Caco-2 (cell line): ENCODE measurements at regions of chr3 and their contacts with region 1.

Region 1: GRCh38 chr3:60755096-60755495 is 496.2 kb downstream of the FHIT start:
- DNase-seq: peak; percentile 48 to 52
- H3K4me3 ChIP-seq: no peak overlapping the region
- H3K4me3 Mint-ChIP-seq: no peak overlapping the region
- H3K27ac Mint-ChIP-seq: no peak overlapping the region
- H3K4me1 ChIP-seq: no peaks in the 10 kb centered on the region
- H3K4me1 Mint-ChIP-seq: no peaks in the 10 kb centered on the region
- H3K27me3 ChIP-seq: no peaks in the 10 kb centered on the region
- H3K27me3 Mint-ChIP-seq: no peaks in the 10 kb centered on the region
- CTCF ChIP-seq: peak; percentile 37 to 48

Region 2: GRCh38 chr3:60877188-60877587 is 122.1 kb after region 1 on chr3:
- CTCF ChIA-PET with region 1: interaction called, 3 read pairs
- POLR2A ChIA-PET with region 1: no interaction called
- intact Hi-C with region 1: loop called (anchors 1 kb)
- DNase-seq: peak in 1 of 2 experiments; percentile 15
- H3K4me3 ChIP-seq: no peak overlapping the region
- H3K4me3 Mint-ChIP-seq: no peak overlapping the region
- H3K27ac Mint-ChIP-seq: peak overlapping the region; percentile 5
- H3K4me1 ChIP-seq: no peaks in the 10 kb centered on the region
- H3K4me1 Mint-ChIP-seq: no peaks in the 10 kb centered on the region
- H3K27me3 ChIP-seq: no peaks in the 10 kb centered on the region
- H3K27me3 Mint-ChIP-seq: peaks cover 4% of the 10 kb centered on the region
- CTCF ChIP-seq: no peak

Region 3: DNA sequence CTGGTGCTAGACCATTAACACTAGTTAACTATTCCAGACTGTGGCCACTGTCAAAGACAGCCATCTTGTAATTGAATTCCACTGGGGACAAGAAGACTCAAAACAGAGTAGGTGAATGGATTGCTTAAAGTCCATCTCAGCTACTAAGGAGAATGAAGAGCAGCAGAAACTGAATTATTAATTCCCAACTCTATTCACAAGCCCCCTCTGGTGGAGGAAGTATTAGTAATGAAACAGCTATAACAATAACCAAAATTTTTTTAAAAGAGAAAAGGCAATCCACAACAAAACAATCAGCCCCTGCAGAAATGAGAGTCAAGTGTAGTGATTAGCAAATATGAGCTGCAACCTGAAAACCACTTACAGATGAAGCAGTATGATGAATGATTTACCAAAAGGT is 193.4 kb after region 1 on chr3:
- CTCF ChIA-PET with region 1: interaction called, 7 read pairs
- POLR2A ChIA-PET with region 1: no interaction called
- intact Hi-C with region 1: loop called (anchors 10 kb)
- DNase-seq: no peak
- H3K4me3 ChIP-seq: no peak overlapping the region
- H3K4me3 Mint-ChIP-seq: no peak overlapping the region
- H3K27ac Mint-ChIP-seq: no peak overlapping the region
- H3K4me1 ChIP-seq: no peaks in the 10 kb centered on the region
- H3K4me1 Mint-ChIP-seq: no peaks in the 10 kb centered on the region
- H3K27me3 ChIP-seq: no peaks in the 10 kb centered on the region
- H3K27me3 Mint-ChIP-seq: no peaks in the 10 kb centered on the region
- CTCF ChIP-seq: peak in 1 of 2 experiments; percentile 23

Region 4: GRCh38 chr3:61008998-61009380 is 253.9 kb after region 1 on chr3:
- CTCF ChIA-PET with region 1: no interaction called
- POLR2A ChIA-PET with region 1: no interaction called
- intact Hi-C with region 1: no loop called
- DNase-seq: no peak
- H3K4me3 ChIP-seq: no peak overlapping the region
- H3K4me3 Mint-ChIP-seq: no peak overlapping the region
- H3K27ac Mint-ChIP-seq: no peak overlapping the region
- H3K4me1 ChIP-seq: no peaks in the 10 kb centered on the region
- H3K4me1 Mint-ChIP-seq: no peaks in the 10 kb centered on the region
- H3K27me3 ChIP-seq: no peaks in the 10 kb centered on the region
- H3K27me3 Mint-ChIP-seq: no peaks in the 10 kb centered on the region
- CTCF ChIP-seq: no peak

Region 5: GRCh38 chr3:61299343-61300005 is 544.4 kb after region 1 on chr3:
- CTCF ChIA-PET with region 1: no interaction called
- POLR2A ChIA-PET with region 1: no interaction called
- intact Hi-C with region 1: loop called (anchors 10 kb)
- DNase-seq: peak in 1 of 2 experiments; percentile 15
- H3K4me3 ChIP-seq: no peak overlapping the region
- H3K4me3 Mint-ChIP-seq: no peak overlapping the region
- H3K27ac Mint-ChIP-seq: no peak overlapping the region
- H3K4me1 ChIP-seq: no peaks in the 10 kb centered on the region
- H3K4me1 Mint-ChIP-seq: no peaks in the 10 kb centered on the region
- H3K27me3 ChIP-seq: no peaks in the 10 kb centered on the region; the same call in 1 of the 2 replicates
- H3K27me3 Mint-ChIP-seq: peaks cover 4% of the 10 kb centered on the region
- CTCF ChIP-seq: peak in 1 of 2 experiments; percentile 3

Region 6: GRCh38 chr3:61371123-61371522 is 616.0 kb after region 1 on chr3:
- CTCF ChIA-PET with region 1: no interaction called
- POLR2A ChIA-PET with region 1: no interaction called
- intact Hi-C with region 1: loop called (anchors 2 kb)
- DNase-seq: peak in 1 of 2 experiments; percentile 46
- H3K4me3 ChIP-seq: no peak overlapping the region
- H3K4me3 Mint-ChIP-seq: no peak overlapping the region
- H3K27ac Mint-ChIP-seq: no peak overlapping the region
- H3K4me1 ChIP-seq: no peaks in the 10 kb centered on the region
- H3K4me1 Mint-ChIP-seq: no peaks in the 10 kb centered on the region
- H3K27me3 ChIP-seq: no peaks in the 10 kb centered on the region
- H3K27me3 Mint-ChIP-seq: no peaks in the 10 kb centered on the region
- CTCF ChIP-seq: peak; percentile 67 to 76